Transverse colon (tissue), 4 donors: ENCODE measurements at regions of chr6 and their contacts with region 1.

Region 1: DNA sequence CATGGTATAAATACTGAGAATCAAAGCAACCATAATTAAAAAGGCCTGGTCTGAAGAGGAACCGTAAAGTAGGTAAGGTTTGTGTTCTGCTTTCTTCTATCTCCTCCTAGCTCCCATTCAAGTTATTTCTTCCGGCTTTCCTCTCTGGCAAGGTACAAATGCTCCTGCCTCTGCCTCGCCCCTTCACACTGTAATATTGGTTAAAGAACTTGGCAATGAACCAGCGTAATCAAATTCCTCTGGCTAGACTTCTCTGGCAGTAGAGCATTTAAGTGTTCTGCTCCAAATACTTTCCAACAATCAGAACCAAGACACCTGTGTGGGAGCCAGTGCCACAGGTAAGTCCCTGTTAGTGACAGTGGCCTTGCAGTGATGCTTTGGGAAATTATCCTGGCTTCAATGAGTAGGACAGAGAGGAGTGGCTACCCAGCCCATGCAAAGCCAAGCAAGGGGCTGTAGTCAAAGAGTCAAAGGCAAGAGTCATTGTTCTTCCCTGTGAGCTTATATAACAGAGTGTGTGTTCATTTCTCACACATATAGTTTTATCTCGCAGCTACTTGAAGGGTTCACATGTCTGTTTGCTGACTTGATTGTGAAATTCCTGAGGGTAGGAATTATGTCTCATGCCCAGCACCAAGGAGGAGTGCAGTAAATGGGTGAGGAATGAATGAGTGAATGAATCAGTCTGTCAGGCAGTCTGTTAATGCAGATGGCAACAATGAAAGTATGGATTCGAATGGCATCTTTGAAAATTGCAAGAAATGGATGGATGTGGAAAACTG is 329.3 kb downstream of the NRN1 start:
- DNase-seq: peak; percentile 19
- H3K4me3 ChIP-seq: no peak overlapping the region
- H3K27ac ChIP-seq: no peak overlapping the region
- H3K4me1 ChIP-seq: peaks cover 0 to 10% (median 7%) of the 10 kb centered on the region in 4 donors
- H3K27me3 ChIP-seq: no peaks in the 10 kb centered on the region
- CTCF ChIP-seq: no peak
- EP300 ChIP-seq: no peak
- POLR2A ChIP-seq: no peak

Region 2: DNA sequence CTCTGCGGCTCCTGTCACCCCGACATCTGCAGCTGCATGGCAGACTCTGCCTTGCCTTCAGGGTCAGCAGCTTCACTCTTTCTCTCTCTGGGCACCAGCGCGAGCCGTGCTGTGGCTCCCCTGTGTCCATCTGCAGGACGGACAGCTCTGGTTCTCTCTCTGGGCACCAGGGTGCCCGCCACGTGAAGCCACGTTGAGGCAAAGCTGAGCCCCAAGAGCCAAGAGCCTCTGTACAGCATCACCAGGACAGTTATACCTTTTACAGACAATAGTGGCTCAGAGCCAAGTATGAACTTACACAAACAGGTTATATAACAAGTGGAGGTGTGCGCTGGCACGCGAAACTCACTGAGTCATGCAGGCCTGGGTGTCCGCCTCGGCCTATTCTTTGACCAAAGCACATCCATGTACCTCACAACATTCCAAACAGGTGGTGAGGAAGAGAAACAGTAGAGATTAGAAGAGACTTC is 1777.4 kb before region 1 on chr6:
- in situ Hi-C with region 1: no loop called
- intact Hi-C with region 1: loop called (anchors 5 kb)
- DNase-seq: peak; percentile 43
- H3K4me3 ChIP-seq: no peak overlapping the region
- H3K27ac ChIP-seq: no peak overlapping the region
- H3K4me1 ChIP-seq: no peaks in the 10 kb centered on the region
- H3K27me3 ChIP-seq: no peaks in the 10 kb centered on the region
- CTCF ChIP-seq: no peak
- EP300 ChIP-seq: no peak
- POLR2A ChIP-seq: no peak